Psoas muscle (tissue), 8 donors: ENCODE measurements at regions of chr1 and their contacts with region 1.

Region 1: DNA sequence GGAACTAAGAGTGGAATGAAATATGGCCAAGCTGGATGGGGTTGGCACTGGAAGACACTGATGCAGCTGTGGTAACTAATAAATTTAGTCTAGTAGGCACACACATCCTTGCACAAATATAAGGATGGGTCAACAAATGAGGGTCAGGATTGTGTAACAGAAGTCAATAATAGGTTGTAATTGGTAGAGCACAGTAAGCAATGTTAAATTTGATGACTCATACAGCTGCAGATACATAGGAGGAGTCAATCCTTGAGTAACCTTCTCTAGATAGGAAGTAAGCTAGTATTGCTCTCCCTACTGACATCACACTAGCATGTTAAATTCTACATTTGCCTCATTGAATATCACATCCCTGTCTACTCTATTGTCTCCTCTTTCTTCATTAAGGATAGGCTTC is 332.1 kb downstream of the PTPRC start:
- DNase-seq: no peak
- ATAC-seq: no peak
- H3K4me3 ChIP-seq: no peak overlapping the region
- H3K27ac ChIP-seq: no peak overlapping the region
- H3K4me1 ChIP-seq: no peaks in the 10 kb centered on the region
- H3K27me3 ChIP-seq: no peaks in the 10 kb centered on the region
- CTCF ChIP-seq: no peak

Region 2: GRCh38 chr1:198373376-198373775 is 597.5 kb before region 1 on chr1:
- intact Hi-C with region 1: no loop called
- DNase-seq: no peak
- ATAC-seq: no peak
- H3K4me3 ChIP-seq: no peak overlapping the region
- H3K27ac ChIP-seq: no peak overlapping the region
- H3K4me1 ChIP-seq: no peaks in the 10 kb centered on the region
- H3K27me3 ChIP-seq: no peaks in the 10 kb centered on the region
- CTCF ChIP-seq: no peak

Region 3: DNA sequence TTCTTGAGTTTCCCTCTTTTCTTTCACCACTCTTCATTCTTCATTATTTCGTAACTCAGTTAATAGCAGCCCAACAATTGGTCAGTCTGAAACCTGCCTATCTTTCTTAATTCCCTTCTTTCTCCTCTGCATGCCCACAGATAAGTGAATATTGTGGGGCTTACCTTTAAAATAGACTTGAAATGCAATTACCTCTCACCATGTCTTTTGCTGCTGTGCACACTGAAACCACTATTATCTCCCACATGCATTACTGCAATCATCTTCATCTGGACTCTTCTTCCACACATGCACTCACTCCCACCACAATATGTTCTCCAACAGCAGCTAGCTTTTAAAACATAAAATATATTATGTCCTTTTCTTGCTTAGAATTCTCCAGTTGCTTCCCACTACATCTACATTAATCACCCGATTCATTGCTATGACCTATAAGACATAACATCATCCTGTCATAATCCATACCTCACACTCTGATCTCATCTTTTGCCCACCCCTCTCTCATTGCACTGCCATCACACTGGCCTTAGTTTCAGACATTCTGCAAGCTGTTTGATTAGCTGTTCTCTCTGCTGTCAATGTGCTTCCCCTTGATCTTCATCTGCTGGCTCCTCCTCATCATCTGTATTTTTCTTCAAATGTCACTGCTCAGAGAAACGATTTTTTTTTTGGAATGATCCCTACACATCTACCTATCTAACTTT is 27.3 kb before region 1 on chr1:
- intact Hi-C with region 1: loop called in 1 of 2 experiments (anchors 2 kb)
- DNase-seq: no peak
- ATAC-seq: no peak
- H3K4me3 ChIP-seq: no peak overlapping the region
- H3K27ac ChIP-seq: no peak overlapping the region
- H3K4me1 ChIP-seq: no peaks in the 10 kb centered on the region
- H3K27me3 ChIP-seq: no peaks in the 10 kb centered on the region
- CTCF ChIP-seq: no peak